Naive thymus-derived CD4-positive, alpha-beta T cell (primary cell): ENCODE measurements at regions of chr6 and their contacts with region 1.

Region 1: GRCh38 chr6:52389626-52390360 is 27.8 kb downstream of the PAQR8 start:
- DNase-seq: peak; percentile 33 to 79 (median 62)
- ATAC-seq: peak; percentile 60
- H3K4me3 ChIP-seq: peak overlapping the region; percentile 62
- H3K4me3 Mint-ChIP-seq: peak overlapping the region; percentile 75 to 89 (median 86)
- H3K27ac ChIP-seq: peak overlapping the region; percentile 89
- H3K27ac Mint-ChIP-seq: peak overlapping the region; percentile 93 to 100 (median 98)
- H3K4me1 ChIP-seq: peaks cover 59 to 75% of the 10 kb centered on the region in 2 donors
- H3K4me1 Mint-ChIP-seq: peaks cover 49 to 96% (median 90%) of the 10 kb centered on the region in 7 donors
- H3K27me3 ChIP-seq: no peaks in the 10 kb centered on the region
- H3K27me3 Mint-ChIP-seq: peaks cover 0 to 6% (median 0%) of the 10 kb centered on the region in 5 donors

Region 2: GRCh38 chr6:52304983-52305390 is 84.8 kb before region 1 on chr6:
- CTCF ChIA-PET with region 1: interaction called, 7 read pairs
- POLR2A ChIA-PET with region 1: interaction called, 20 read pairs
- intact Hi-C with region 1: loop called in 1 of 2 experiments (anchors 2 kb)
- DNase-seq: peak in 1 of 9 donors; percentile 5
- ATAC-seq: peak; percentile 62
- H3K4me3 ChIP-seq: peak overlapping the region; percentile 20
- H3K4me3 Mint-ChIP-seq: peak overlapping the region; percentile 38 to 84 (median 74)
- H3K27ac ChIP-seq: peak overlapping the region; percentile 64
- H3K27ac Mint-ChIP-seq: peak overlapping the region; percentile 68 to 98 (median 96)
- H3K4me1 ChIP-seq: peaks cover 53 to 69% of the 10 kb centered on the region in 2 donors
- H3K4me1 Mint-ChIP-seq: peaks cover 47 to 88% (median 78%) of the 10 kb centered on the region in 7 donors
- H3K27me3 ChIP-seq: no peaks in the 10 kb centered on the region
- H3K27me3 Mint-ChIP-seq: no peaks in the 10 kb centered on the region

Region 3: DNA sequence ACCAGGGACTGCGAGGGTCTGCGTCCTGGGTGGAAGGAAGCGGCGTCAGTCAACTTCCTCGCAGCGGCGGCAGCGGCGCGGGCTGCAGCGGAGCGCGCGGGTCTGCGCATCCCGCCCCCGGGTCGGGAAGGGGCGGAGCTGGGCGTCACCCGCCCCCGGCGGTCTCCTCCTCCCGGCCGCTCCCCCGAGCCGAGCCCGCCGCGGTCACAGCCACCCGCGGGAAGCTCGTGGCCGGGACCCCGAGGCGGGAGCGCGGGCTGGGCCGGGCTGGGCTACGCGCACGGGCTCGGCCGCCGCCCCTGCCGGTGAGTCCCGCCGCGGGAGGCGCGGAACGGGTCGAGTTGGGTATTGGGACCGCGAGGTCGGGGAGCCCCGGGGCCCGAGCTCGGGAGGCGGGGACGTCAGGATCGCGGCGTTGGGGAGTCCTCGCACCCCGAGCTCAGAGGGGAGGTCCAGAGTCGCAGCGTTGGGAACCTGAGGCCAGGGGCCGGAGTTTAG is 27.8 kb before region 1 on chr6 and contains the start of gene PAQR8:
- CTCF ChIA-PET with region 1: interaction called, 26 read pairs
- POLR2A ChIA-PET with region 1: interaction called, 85 read pairs
- intact Hi-C with region 1: loop called (anchors 1 kb)
- DNase-seq: peak; percentile 77 to 89 (median 86)
- ATAC-seq: peak; percentile 95
- H3K4me3 ChIP-seq: peak within 1 kb of the TSS; percentile 90
- H3K4me3 Mint-ChIP-seq: peak within 1 kb of the TSS; percentile 83 to 100 (median 98)
- H3K27ac ChIP-seq: peak within 1 kb of the TSS; percentile 86
- H3K27ac Mint-ChIP-seq: peak within 1 kb of the TSS; percentile 90 to 99 (median 94)
- H3K4me1 ChIP-seq: peaks cover 25 to 28% of the 10 kb centered on the region in 2 donors
- H3K4me1 Mint-ChIP-seq: peaks cover 25 to 55% (median 45%) of the 10 kb centered on the region in 7 donors
- H3K27me3 ChIP-seq: no peaks in the 10 kb centered on the region
- H3K27me3 Mint-ChIP-seq: peaks cover 0 to 9% (median 0%) of the 10 kb centered on the region in 5 donors
- total RNA-seq, gene PAQR8: 7.5 to 46.2 (median 21.6) TPM

Region 4: GRCh38 chr6:52377538-52378221 is 12.1 kb before region 1 on chr6:
- CTCF ChIA-PET with region 1: interaction called, 78 read pairs
- POLR2A ChIA-PET with region 1: interaction called, 77 read pairs
- intact Hi-C with region 1: loop called in 1 of 2 experiments (anchors 1 kb)
- DNase-seq: peak in 3 of 9 donors; percentile 34 to 50 (median 36)
- ATAC-seq: peak; percentile 29
- H3K4me3 ChIP-seq: no peak overlapping the region
- H3K4me3 Mint-ChIP-seq: peak overlapping the region; percentile 22 to 87 (median 63)
- H3K27ac ChIP-seq: peak overlapping the region; percentile 52
- H3K27ac Mint-ChIP-seq: peak overlapping the region; percentile 51 to 96 (median 87)
- H3K4me1 ChIP-seq: peaks cover 10 to 54% of the 10 kb centered on the region in 2 donors
- H3K4me1 Mint-ChIP-seq: peaks cover 50 to 86% (median 82%) of the 10 kb centered on the region in 7 donors
- H3K27me3 ChIP-seq: no peaks in the 10 kb centered on the region
- H3K27me3 Mint-ChIP-seq: no peaks in the 10 kb centered on the region

Region 5: DNA sequence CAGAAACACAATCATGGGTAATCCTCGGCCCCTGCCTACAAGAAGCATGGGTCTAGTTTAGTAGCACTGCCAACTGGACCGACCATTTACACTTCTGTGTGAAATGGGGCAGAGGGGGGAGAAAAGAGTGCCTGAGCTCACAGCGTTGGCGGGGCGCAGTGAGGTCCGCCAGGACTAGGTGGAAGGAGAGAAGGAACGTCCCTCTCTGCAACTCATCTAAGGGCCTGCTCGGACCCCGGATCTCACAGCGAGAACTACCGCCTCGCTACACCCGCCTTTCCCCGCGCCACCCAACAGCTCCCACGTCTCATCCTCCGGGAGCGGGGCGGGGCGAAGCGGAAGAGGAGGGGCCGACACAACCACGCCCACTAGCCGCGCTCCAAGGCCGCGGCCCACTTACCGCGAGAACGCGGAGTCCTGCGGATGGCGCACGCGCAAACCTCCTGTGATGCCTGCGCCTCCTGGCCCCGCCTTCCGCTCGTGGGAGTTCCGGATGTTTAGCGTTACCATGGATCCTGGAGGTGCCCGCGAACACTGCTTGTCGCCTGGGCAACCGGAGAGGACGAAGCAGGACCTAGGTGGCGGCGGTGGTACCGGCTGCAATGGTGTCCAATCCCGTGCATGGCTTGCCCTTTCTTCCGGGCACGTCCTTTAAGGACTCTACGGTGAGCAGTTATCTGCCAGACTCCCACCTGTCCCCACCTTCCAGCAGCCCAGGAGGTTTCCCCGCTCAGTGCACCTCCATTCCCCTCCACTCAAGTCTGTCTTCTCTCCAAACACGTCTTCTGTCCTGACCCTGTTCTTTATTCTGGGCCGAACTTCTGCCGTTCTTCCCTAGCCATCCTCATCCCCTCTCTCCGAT is 30.2 kb after region 1 on chr6 and contains the start of gene EFHC1:
- CTCF ChIA-PET with region 1: interaction called, 7 read pairs
- POLR2A ChIA-PET with region 1: interaction called, 6 read pairs
- intact Hi-C with region 1: loop called (anchors 1 kb)
- DNase-seq: peak; percentile 95 to 98 (median 97)
- ATAC-seq: peak; percentile 97
- H3K4me3 ChIP-seq: peak within 1 kb of the TSS; percentile 73
- H3K4me3 Mint-ChIP-seq: no peak within 1 kb of the TSS
- H3K27ac ChIP-seq: peak within 1 kb of the TSS; percentile 72
- H3K27ac Mint-ChIP-seq: peak within 1 kb of the TSS in 1 of 9 donors; percentile 96
- H3K4me1 ChIP-seq: peaks cover 13 to 19% of the 10 kb centered on the region in 2 donors
- H3K4me1 Mint-ChIP-seq: peaks cover 10 to 31% (median 24%) of the 10 kb centered on the region in 7 donors
- H3K27me3 ChIP-seq: no peaks in the 10 kb centered on the region
- H3K27me3 Mint-ChIP-seq: peaks cover 0 to 5% (median 0%) of the 10 kb centered on the region in 5 donors
- total RNA-seq, gene EFHC1: 2.4 to 13.8 (median 6.0) TPM